ENCODE measurements at regions of chr21 and their contacts with region 1.

Region 1: GRCh38 chr21:16821588-16821987 is 691.3 kb upstream of the CXADR start:
- DNase-seq: no peak
- ATAC-seq: no peak
- H3K4me3 ChIP-seq: no peak overlapping the region
- H3K27ac ChIP-seq: no peak overlapping the region
- H3K4me1 ChIP-seq: no peaks in the 10 kb centered on the region
- H3K27me3 ChIP-seq: no peaks in the 10 kb centered on the region
- CTCF ChIP-seq: no peak

Region 2: DNA sequence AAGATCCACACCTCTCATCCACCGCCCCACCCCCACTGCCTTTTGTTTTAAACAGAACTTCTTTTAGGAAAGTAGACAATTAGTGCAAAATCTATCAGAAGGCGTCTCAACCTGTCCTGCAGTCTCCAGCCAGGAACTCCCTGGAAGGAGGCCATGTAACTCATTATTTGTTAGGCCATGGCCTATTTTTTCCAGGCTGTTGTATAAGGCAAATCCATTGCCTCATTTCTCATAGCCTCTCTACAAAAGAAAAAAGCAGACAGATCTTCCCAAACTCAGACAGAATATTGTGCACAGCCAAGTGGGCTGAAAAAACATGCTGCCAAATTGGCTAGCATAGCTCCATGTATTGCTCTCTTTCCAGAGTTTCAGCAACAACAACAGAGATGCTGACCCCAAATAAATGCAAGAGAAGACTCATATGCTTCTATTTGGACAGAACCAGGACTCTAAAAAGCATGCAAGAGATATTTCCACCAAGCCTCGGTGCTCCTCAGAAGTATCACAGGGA is 79.4 kb before region 1 on chr21:
- intact Hi-C with region 1: loop called in 1 of 3 experiments (anchors 10 kb)
- DNase-seq: no peak
- ATAC-seq: peak in 3 of 4 donors; percentile 41 to 61 (median 52)
- H3K4me3 ChIP-seq: no peak overlapping the region
- H3K27ac ChIP-seq: no peak overlapping the region
- H3K4me1 ChIP-seq: no peaks in the 10 kb centered on the region
- H3K27me3 ChIP-seq: no peaks in the 10 kb centered on the region
- CTCF ChIP-seq: no peak